Lower leg skin (tissue), 4 donors: ENCODE measurements at regions of chr2 and their contacts with region 1.

Region 1: GRCh38 chr2:43542285-43542937 is 53.4 kb downstream of the THADA start:
- DNase-seq: no peak
- H3K4me3 ChIP-seq: no peak overlapping the region
- CTCF ChIP-seq: no peak
- POLR2A ChIP-seq: no peak

Region 2: DNA sequence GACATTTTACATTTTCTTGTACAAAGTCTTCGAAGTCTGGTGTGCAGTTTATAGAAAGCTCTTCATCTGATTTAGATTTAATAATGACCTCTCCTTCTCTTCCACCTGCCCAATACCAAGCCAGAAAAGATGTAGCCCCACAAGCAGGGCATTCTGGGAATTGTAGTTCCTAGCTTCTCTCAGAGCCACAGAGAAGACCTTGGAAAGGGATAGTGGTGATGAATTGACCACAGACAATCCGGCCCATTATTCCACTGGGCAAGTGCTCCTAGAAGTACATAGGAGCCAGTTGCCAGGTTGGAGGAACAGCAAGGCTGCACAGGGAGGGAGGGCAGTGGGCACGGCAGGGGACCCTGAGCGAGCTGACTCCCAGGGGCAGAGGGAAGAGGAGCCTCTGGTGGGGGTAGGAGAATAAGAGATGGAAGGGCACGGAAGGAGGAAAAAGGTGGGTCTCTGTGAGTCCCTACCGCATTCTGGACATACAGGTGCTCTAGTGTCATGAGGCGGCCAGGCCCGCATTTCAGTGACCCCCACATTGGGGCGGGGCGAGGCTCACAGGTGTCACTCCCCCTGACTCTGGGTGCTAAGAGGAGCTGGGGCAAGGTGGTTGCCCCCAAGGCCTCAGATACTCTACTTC is 597.5 kb before region 1 on chr2:
- intact Hi-C with region 1: loop called (anchors 5 kb)
- DNase-seq: no peak
- H3K4me3 ChIP-seq: no peak overlapping the region
- CTCF ChIP-seq: no peak
- POLR2A ChIP-seq: no peak

Region 3: GRCh38 chr2:43239981-43240761 is 302.2 kb before region 1 on chr2:
- intact Hi-C with region 1: loop called (anchors 10 kb)
- DNase-seq: no peak
- H3K4me3 ChIP-seq: no peak overlapping the region
- CTCF ChIP-seq: no peak
- POLR2A ChIP-seq: no peak